ENCODE measurements at regions of chr20 and their contacts with region 1.

Region 1: GRCh38 chr20:18005231-18006109 is 36.7 kb downstream of the MGME1 start:
- DNase-seq: no peak
- H3K4me3 ChIP-seq: no peak overlapping the region
- H3K27ac ChIP-seq: no peak overlapping the region
- H3K4me1 ChIP-seq: no peaks in the 10 kb centered on the region
- H3K27me3 ChIP-seq: no peaks in the 10 kb centered on the region
- CTCF ChIP-seq: no peak
- POLR2A ChIP-seq: no peak

Region 2: GRCh38 chr20:17976305-17976704 is 29.2 kb before region 1 on chr20:
- intact Hi-C with region 1: loop called (anchors 2 kb)
- DNase-seq: no peak
- H3K4me3 ChIP-seq: no peak overlapping the region
- H3K27ac ChIP-seq: no peak overlapping the region
- H3K4me1 ChIP-seq: no peaks in the 10 kb centered on the region
- H3K27me3 ChIP-seq: no peaks in the 10 kb centered on the region
- CTCF ChIP-seq: no peak
- POLR2A ChIP-seq: no peak

Region 3: GRCh38 chr20:18066421-18067336 is 61.2 kb after region 1 on chr20:
- intact Hi-C with region 1: loop called (anchors 2 kb)
- DNase-seq: no peak
- H3K4me3 ChIP-seq: no peak overlapping the region
- H3K27ac ChIP-seq: no peak overlapping the region
- H3K4me1 ChIP-seq: no peaks in the 10 kb centered on the region
- H3K27me3 ChIP-seq: peaks cover 0 to 4% of the 10 kb centered on the region in 2 donors
- CTCF ChIP-seq: no peak
- POLR2A ChIP-seq: no peak

Region 4: DNA sequence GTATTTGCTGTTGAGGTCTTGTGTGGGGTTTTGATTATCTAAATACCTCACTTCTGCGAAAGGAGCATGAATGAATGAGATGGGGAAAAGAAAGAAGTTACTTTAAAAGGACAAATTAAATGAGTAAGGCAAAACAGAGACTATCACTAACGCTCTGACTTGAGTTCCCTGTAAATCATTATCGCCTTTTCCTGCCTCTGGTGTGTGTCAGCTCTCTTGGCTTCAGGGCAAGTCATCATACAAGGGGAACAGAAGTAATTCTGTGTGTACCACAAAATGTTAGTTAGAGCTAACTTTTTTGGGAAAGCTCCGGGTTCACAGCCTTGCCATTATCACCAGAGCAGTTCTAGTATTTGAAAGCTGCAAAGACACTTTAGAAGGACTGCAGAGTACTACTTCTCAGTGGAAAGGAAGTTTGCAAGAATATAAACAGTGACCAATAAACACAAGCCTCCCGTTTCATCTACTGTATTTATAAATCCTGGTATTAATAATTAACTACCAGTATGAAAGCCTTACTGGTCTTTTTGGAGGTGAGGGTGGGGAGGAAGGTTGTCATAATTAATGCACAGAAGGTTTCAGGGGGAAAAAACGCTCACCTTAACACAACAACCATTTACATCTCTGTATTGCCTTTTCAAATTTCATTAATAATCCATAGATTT is 460.2 kb after region 1 on chr20:
- intact Hi-C with region 1: no loop called
- DNase-seq: no peak
- H3K4me3 ChIP-seq: no peak overlapping the region
- H3K27ac ChIP-seq: no peak overlapping the region
- H3K4me1 ChIP-seq: peaks cover 0 to 4% of the 10 kb centered on the region in 2 donors
- H3K27me3 ChIP-seq: no peaks in the 10 kb centered on the region
- CTCF ChIP-seq: no peak
- POLR2A ChIP-seq: no peak